ENCODE measurements at regions of chr1 and their contacts with region 1.

Region 1: DNA sequence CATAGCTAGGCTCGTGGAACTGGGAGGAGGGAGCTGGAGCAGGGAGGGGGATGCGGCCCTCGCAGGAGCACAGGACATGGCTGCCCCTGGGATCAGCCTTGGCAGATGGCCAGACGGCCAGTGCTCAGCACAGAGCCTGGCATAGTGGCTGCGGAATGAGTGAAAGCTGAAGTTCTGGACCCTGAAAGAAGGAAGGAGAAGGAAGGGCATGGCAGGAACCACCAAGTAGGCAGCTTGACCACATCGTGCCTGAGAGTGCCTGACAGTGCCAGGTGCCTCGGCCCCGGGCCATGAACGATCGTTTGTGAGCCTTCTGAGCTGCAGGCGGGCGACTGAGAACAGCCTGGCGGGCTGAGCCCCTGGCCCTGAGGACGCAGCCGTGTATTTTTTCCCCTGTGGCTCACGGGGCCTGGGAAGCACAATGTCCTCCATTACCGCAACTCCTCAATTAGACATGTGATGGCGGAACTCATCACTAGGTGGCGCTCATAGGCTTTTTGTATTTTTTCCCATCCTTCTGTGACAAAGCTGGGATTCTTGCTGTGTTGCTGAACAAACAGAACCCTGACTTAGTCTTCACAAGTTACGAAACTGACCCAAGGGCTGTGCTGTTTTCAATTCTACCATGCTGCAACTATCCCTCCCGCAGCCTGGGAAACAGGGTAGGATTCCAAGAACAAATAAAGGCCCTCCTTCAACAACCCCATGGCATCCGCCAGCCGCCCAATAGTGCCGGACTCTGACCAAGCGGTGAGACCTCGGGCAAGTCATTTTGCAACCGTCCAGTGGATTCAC is 29.9 kb upstream of the TMEM61 start:
- DNase-seq: peak; percentile 74
- CTCF ChIP-seq: peak; percentile 71

Region 2: DNA sequence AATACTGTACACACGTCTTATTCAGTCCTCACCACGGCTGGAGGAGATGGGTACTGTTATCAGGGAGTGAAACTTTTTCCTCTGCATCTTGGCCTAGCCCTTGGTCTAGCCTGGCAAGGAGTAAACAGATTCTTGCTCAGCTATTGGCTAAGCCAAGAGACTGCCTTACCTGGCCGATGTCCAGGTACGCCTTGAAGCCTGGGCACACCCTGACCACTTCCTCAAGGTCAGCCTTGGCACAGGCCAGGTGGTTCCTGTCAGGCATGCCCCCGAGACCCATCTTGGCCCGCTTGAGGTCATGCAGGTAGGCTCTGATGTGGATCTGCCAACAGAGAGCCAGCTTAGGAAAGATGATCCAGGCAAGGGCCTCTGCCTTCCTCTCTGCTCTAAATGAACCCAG is 168.4 kb before region 1 on chr1:
- CTCF ChIA-PET with region 1: no interaction called
- POLR2A ChIA-PET with region 1: no interaction called
- DNase-seq: no peak
- CTCF ChIP-seq: no peak

Region 3: GRCh38 chr1:54934869-54935268 is 15.7 kb before region 1 on chr1:
- CTCF ChIA-PET with region 1: interaction called, 49 read pairs
- POLR2A ChIA-PET with region 1: no interaction called
- DNase-seq: no peak
- CTCF ChIP-seq: no peak

Region 4: GRCh38 chr1:54965624-54966340 is 15.2 kb after region 1 on chr1:
- CTCF ChIA-PET with region 1: interaction called, 25 read pairs
- POLR2A ChIA-PET with region 1: no interaction called
- DNase-seq: peak; percentile 40
- CTCF ChIP-seq: no peak

Region 5: GRCh38 chr1:54973205-54973921 is 22.8 kb after region 1 on chr1:
- CTCF ChIA-PET with region 1: interaction called, 26 read pairs
- POLR2A ChIA-PET with region 1: no interaction called
- DNase-seq: peak; percentile 10
- CTCF ChIP-seq: peak; percentile 3